CD4-positive, alpha-beta memory T cell (primary cell): ENCODE measurements at regions of chr1 and their contacts with region 1.

Region 1: GRCh38 chr1:160837558-160838205 is 25.0 kb downstream of the CD244 start:
- DNase-seq: peak; percentile 88 to 91 (median 89)
- H3K4me3 ChIP-seq: no peak overlapping the region
- H3K4me3 Mint-ChIP-seq: peak overlapping the region in 7 of 8 donors; percentile 52 to 88 (median 71)
- H3K27ac ChIP-seq: peak overlapping the region; percentile 60
- H3K27ac Mint-ChIP-seq: peak overlapping the region; percentile 92 to 99 (median 94)
- H3K4me1 ChIP-seq: peaks cover 48% of the 10 kb centered on the region
- H3K4me1 Mint-ChIP-seq: peaks cover 46 to 69% (median 58%) of the 10 kb centered on the region in 4 donors
- H3K27me3 ChIP-seq: no peaks in the 10 kb centered on the region
- H3K27me3 Mint-ChIP-seq: peaks cover 0 to under 1% of the 10 kb centered on the region in 2 donors

Region 2: DNA sequence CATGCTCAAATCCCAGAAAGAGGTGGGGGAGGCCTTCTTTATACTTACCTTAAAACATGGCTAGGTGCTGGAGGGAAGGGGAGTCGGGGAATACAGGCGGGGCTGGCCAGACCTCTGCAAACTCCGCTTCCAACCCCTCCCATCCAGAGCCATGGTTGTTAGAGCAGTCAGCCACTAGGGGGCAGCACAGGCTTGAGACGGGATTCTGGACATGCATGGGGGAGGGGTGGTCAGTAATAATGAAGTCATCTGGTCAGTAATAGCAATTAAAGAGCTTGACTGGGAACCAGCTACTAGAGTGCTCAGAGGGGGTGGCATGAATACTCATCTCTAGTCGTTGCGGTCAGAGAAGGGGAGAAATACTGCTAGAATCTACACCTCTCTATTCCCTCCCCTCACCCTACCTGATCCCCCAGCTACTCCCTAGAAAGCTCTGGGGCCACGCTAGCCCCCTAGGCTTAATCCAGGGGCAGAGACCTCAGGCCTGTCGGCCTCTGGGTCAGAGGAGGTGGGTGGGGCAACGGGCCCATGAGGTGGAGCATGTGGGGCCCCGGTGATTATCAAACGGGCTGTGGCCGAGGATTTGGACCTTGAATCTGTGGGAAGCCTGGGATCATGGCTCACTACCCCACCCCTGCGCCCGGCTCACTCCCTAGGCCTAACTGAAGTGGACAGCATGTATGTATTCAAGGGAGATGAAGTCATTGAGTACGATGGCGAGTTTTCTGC is 644.4 kb before region 1 on chr1:
- CTCF ChIA-PET with region 1: no interaction called
- POLR2A ChIA-PET with region 1: no interaction called
- intact Hi-C with region 1: no loop called
- DNase-seq: peak; percentile 67 to 75 (median 68)
- H3K4me3 ChIP-seq: no peak overlapping the region
- H3K4me3 Mint-ChIP-seq: no peak overlapping the region
- H3K27ac ChIP-seq: no peak overlapping the region
- H3K27ac Mint-ChIP-seq: no peak overlapping the region
- H3K4me1 ChIP-seq: peaks cover 9% of the 10 kb centered on the region
- H3K4me1 Mint-ChIP-seq: no peaks in the 10 kb centered on the region
- H3K27me3 ChIP-seq: no peaks in the 10 kb centered on the region
- H3K27me3 Mint-ChIP-seq: peaks cover 1 to 3% of the 10 kb centered on the region in 2 donors

Region 3: DNA sequence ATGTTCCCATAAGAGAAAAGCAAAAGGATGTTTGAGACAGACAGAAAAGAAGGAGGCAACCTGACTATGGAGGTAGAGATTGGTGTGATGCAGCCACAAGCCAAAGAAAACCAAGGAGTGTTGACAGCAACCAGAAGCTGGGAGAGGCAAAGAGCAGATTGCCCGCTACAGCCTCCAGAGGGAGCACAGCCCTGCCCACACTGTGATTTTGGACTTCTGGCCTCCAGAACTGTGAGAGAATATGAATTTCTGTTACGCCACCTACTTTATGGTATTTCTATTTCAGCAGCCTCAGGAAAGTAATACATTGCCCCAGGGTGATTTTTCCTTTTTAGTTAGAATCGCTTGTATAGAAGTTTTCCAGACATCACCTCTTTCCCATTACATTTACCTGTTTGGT is 343.1 kb before region 1 on chr1:
- CTCF ChIA-PET with region 1: no interaction called
- POLR2A ChIA-PET with region 1: no interaction called
- intact Hi-C with region 1: no loop called
- DNase-seq: no peak
- H3K4me3 ChIP-seq: no peak overlapping the region
- H3K4me3 Mint-ChIP-seq: no peak overlapping the region
- H3K27ac ChIP-seq: no peak overlapping the region
- H3K27ac Mint-ChIP-seq: peak overlapping the region in 4 of 7 donors; percentile 6 to 16 (median 10)
- H3K4me1 ChIP-seq: peaks cover 7% of the 10 kb centered on the region
- H3K4me1 Mint-ChIP-seq: peaks cover 9 to 35% (median 27%) of the 10 kb centered on the region in 4 donors
- H3K27me3 ChIP-seq: no peaks in the 10 kb centered on the region
- H3K27me3 Mint-ChIP-seq: no peaks in the 10 kb centered on the region

Region 4: GRCh38 chr1:160558660-160559380 is 278.9 kb before region 1 on chr1:
- CTCF ChIA-PET with region 1: no interaction called
- POLR2A ChIA-PET with region 1: no interaction called
- intact Hi-C with region 1: no loop called
- DNase-seq: no peak
- H3K4me3 ChIP-seq: peak overlapping the region; percentile 21 to 42
- H3K4me3 Mint-ChIP-seq: peak overlapping the region; percentile 78 to 92 (median 82)
- H3K27ac ChIP-seq: peak overlapping the region; percentile 54
- H3K27ac Mint-ChIP-seq: peak overlapping the region; percentile 84 to 98 (median 93)
- H3K4me1 ChIP-seq: peaks cover 79% of the 10 kb centered on the region
- H3K4me1 Mint-ChIP-seq: peaks cover 56 to 80% (median 66%) of the 10 kb centered on the region in 4 donors
- H3K27me3 ChIP-seq: no peaks in the 10 kb centered on the region
- H3K27me3 Mint-ChIP-seq: no peaks in the 10 kb centered on the region

Region 5: GRCh38 chr1:160681067-160681890 is 156.4 kb before region 1 on chr1:
- CTCF ChIA-PET with region 1: interaction called, 58 read pairs
- POLR2A ChIA-PET with region 1: interaction called, 4 read pairs
- intact Hi-C with region 1: no loop called
- DNase-seq: peak; percentile 82 to 88 (median 85)
- H3K4me3 ChIP-seq: no peak overlapping the region
- H3K4me3 Mint-ChIP-seq: peak overlapping the region in 5 of 8 donors; percentile 15 to 58 (median 26)
- H3K27ac ChIP-seq: peak overlapping the region; percentile 55
- H3K27ac Mint-ChIP-seq: peak overlapping the region; percentile 67 to 97 (median 91)
- H3K4me1 ChIP-seq: peaks cover 55% of the 10 kb centered on the region
- H3K4me1 Mint-ChIP-seq: peaks cover 49 to 69% (median 53%) of the 10 kb centered on the region in 4 donors
- H3K27me3 ChIP-seq: no peaks in the 10 kb centered on the region
- H3K27me3 Mint-ChIP-seq: no peaks in the 10 kb centered on the region

Region 6: GRCh38 chr1:160777486-160778089 is 60.1 kb before region 1 on chr1:
- CTCF ChIA-PET with region 1: interaction called, 64 read pairs
- POLR2A ChIA-PET with region 1: interaction called, 10 read pairs
- intact Hi-C with region 1: loop called (anchors 1 kb)
- DNase-seq: peak; percentile 69 to 75 (median 71)
- H3K4me3 ChIP-seq: no peak overlapping the region
- H3K4me3 Mint-ChIP-seq: no peak overlapping the region
- H3K27ac ChIP-seq: no peak overlapping the region
- H3K27ac Mint-ChIP-seq: peak overlapping the region in 3 of 7 donors; percentile 47 to 81 (median 58)
- H3K4me1 ChIP-seq: peaks cover 22% of the 10 kb centered on the region
- H3K4me1 Mint-ChIP-seq: peaks cover 17 to 25% (median 21%) of the 10 kb centered on the region in 4 donors
- H3K27me3 ChIP-seq: no peaks in the 10 kb centered on the region
- H3K27me3 Mint-ChIP-seq: peaks cover 0 to 2% of the 10 kb centered on the region in 2 donors

Region 7: GRCh38 chr1:160821628-160822027 is 16.1 kb before region 1 on chr1:
- CTCF ChIA-PET with region 1: interaction called, 19 read pairs
- POLR2A ChIA-PET with region 1: interaction called, 3 read pairs
- intact Hi-C with region 1: no loop called
- DNase-seq: no peak
- H3K4me3 ChIP-seq: no peak overlapping the region
- H3K4me3 Mint-ChIP-seq: no peak overlapping the region
- H3K27ac ChIP-seq: no peak overlapping the region
- H3K27ac Mint-ChIP-seq: peak overlapping the region in 5 of 7 donors; percentile 10 to 71 (median 47)
- H3K4me1 ChIP-seq: no peaks in the 10 kb centered on the region
- H3K4me1 Mint-ChIP-seq: peaks cover 0 to 6% (median 3%) of the 10 kb centered on the region in 4 donors
- H3K27me3 ChIP-seq: no peaks in the 10 kb centered on the region
- H3K27me3 Mint-ChIP-seq: no peaks in the 10 kb centered on the region

Region 8: DNA sequence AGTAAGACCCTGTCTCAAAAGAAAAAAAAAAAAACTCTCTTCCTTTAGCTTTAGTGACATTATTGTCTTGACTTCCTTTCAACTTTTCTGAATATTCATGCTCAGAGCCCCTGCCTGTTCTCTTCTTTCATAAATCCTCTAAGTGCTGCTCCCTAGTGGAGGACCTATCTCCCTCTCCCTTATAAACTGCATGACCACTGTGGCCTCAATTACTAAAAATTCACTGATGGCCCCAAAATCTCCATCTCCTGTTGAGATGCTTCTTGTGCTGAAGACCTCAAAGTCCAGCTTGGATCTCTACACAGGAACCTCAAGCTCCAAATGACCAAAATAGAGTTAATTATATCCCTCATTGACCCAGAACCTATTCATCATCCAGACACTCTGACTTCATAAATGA is 39.5 kb after region 1 on chr1:
- CTCF ChIA-PET with region 1: interaction called, 184 read pairs
- POLR2A ChIA-PET with region 1: interaction called, 10 read pairs
- intact Hi-C with region 1: loop called (anchors 1 kb)
- DNase-seq: peak in 4 of 5 donors; percentile 45 to 56 (median 54)
- H3K4me3 ChIP-seq: no peak overlapping the region
- H3K4me3 Mint-ChIP-seq: peak overlapping the region in 1 of 8 donors; percentile 15
- H3K27ac ChIP-seq: no peak overlapping the region
- H3K27ac Mint-ChIP-seq: peak overlapping the region in 2 of 7 donors; percentile 1 to 2
- H3K4me1 ChIP-seq: peaks cover 7% of the 10 kb centered on the region
- H3K4me1 Mint-ChIP-seq: peaks cover 5 to 22% (median 6%) of the 10 kb centered on the region in 4 donors
- H3K27me3 ChIP-seq: no peaks in the 10 kb centered on the region
- H3K27me3 Mint-ChIP-seq: peaks cover 0 to 6% of the 10 kb centered on the region in 2 donors

Region 9: GRCh38 chr1:160942926-160943325 is 105.2 kb after region 1 on chr1:
- CTCF ChIA-PET with region 1: interaction called, 11 read pairs
- POLR2A ChIA-PET with region 1: no interaction called
- intact Hi-C with region 1: no loop called
- DNase-seq: no peak
- H3K4me3 ChIP-seq: no peak overlapping the region
- H3K4me3 Mint-ChIP-seq: no peak overlapping the region
- H3K27ac ChIP-seq: no peak overlapping the region
- H3K27ac Mint-ChIP-seq: no peak overlapping the region
- H3K4me1 ChIP-seq: no peaks in the 10 kb centered on the region
- H3K4me1 Mint-ChIP-seq: no peaks in the 10 kb centered on the region
- H3K27me3 ChIP-seq: no peaks in the 10 kb centered on the region
- H3K27me3 Mint-ChIP-seq: peaks cover 0 to 2% of the 10 kb centered on the region in 2 donors

Region 10: DNA sequence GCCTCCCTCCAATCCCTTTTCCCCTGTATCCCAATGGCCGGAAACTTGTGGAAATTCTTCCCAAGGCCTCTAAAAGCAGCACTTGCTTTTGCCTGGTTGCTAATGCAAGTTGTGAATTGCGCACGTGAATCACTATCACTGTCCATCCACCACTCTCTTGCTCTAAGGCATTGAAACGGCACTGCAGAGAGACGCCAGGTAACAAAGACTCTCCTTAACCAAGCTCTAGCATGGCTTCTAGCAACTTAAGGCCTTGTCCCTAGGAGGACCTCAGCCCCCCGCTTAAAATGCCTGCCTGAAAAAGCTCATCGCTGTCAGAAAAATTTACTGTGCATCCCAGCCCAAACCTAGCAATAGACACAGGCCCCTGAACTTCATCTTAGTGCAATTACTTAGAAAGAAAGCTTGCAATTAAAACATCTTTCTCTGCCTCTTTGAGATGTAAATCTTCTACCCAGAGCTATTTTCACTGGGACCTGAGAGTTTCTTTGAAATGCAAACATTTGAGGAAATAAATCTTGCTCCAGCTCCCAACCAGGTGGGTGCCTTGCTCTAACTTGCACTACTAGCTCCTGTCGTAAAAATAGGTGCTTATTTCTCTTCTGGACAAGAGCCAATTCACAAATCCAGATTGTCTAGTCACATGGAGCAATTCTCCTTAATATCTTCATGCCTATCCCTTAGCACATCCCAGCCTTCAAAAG is 149.8 kb after region 1 on chr1:
- CTCF ChIA-PET with region 1: interaction called, 23 read pairs
- POLR2A ChIA-PET with region 1: interaction called, 10 read pairs
- intact Hi-C with region 1: loop called (anchors 1 kb)
- DNase-seq: no peak
- H3K4me3 ChIP-seq: no peak overlapping the region
- H3K4me3 Mint-ChIP-seq: no peak overlapping the region
- H3K27ac ChIP-seq: no peak overlapping the region
- H3K27ac Mint-ChIP-seq: no peak overlapping the region
- H3K4me1 ChIP-seq: peaks cover 8% of the 10 kb centered on the region
- H3K4me1 Mint-ChIP-seq: peaks cover 2 to 9% (median 6%) of the 10 kb centered on the region in 4 donors
- H3K27me3 ChIP-seq: no peaks in the 10 kb centered on the region
- H3K27me3 Mint-ChIP-seq: peaks cover 3 to 6% of the 10 kb centered on the region in 2 donors

Region 11: DNA sequence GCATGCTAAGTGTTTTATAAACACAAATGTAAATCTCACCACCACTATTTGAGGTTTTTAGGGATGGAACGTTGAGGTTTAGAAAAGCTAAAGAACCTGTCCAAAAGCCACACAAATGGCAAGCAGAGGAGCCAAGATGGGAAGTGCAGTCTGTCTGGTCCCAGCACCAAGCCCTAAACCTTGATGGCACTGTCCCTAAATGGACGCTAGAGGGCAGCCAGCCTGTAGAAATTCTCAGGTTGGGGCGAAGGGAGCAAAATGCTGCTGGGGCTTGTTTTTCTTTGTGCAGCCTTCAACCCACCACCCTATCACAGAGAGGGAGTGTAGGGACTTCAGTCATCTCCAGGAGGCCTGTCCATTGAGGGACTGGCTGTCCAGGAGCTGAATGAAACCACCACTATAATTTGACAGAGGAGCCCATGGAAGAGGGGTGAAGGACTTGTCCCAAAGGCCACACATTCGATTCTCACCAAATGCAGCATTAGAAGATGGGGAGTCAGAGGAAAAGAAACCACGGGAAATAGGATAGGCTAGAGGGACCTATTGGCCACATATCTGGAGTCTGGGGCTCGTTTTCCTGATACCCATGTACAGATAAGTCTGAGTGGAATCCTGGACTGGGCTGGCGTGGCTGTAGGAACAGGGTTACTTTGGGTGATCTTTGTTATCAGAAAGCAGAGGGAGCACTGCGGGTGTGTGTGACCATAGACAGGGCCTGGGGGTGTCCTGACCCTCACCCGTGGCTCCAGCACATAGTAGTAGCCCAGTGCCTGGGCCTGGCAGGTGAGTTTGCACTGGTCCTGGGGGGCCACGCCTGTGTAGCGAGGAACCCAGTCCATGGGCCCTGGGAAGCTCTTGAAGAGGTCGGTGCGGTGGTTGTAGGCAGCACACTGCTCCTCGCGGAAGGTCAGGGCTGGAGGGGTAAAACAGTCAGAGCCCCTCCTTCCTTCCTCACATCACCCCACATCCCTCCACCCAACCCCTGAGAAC is 355.1 kb after region 1 on chr1:
- CTCF ChIA-PET with region 1: no interaction called
- POLR2A ChIA-PET with region 1: no interaction called
- intact Hi-C with region 1: no loop called
- DNase-seq: peak; percentile 66 to 74 (median 71)
- H3K4me3 ChIP-seq: no peak overlapping the region
- H3K4me3 Mint-ChIP-seq: peak overlapping the region in 4 of 8 donors; percentile 17 to 53 (median 32)
- H3K27ac ChIP-seq: no peak overlapping the region
- H3K27ac Mint-ChIP-seq: peak overlapping the region; percentile 14 to 92 (median 82)
- H3K4me1 ChIP-seq: peaks cover 47% of the 10 kb centered on the region
- H3K4me1 Mint-ChIP-seq: peaks cover 22 to 43% (median 32%) of the 10 kb centered on the region in 4 donors
- H3K27me3 ChIP-seq: no peaks in the 10 kb centered on the region
- H3K27me3 Mint-ChIP-seq: no peaks in the 10 kb centered on the region